B cell (primary cell): ENCODE measurements at regions of chr6 and their contacts with region 1.

Region 1: DNA sequence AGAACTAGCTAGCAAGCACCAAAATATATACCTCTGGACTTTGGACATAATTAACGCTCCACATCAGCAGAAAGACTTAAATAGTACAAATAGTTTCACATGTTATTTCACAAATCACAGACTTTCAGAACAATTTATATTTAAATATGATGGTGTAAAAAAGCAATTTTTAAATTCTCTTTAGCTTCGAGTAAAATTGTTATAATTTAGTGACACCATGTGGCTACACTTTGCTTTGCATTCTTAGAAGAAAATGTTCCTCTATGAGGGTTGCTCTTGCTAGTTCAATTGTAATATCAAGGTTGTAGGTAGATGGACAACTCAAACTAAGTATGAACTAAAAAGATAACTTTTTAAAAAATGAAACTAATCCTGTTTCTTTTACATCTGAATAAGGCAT is 69.0 kb downstream of the BTBD9 start:
- DNase-seq: peak; percentile 50
- ATAC-seq: no peak
- H3K4me3 ChIP-seq: no peak overlapping the region
- H3K4me3 Mint-ChIP-seq: no peak overlapping the region
- H3K27ac ChIP-seq: peak overlapping the region; percentile 91 to 93
- H3K27ac Mint-ChIP-seq: peak overlapping the region; percentile 81
- H3K4me1 ChIP-seq: peaks cover 17 to 21% of the 10 kb centered on the region in 2 donors
- H3K4me1 Mint-ChIP-seq: peaks cover 24% of the 10 kb centered on the region
- H3K27me3 ChIP-seq: no peaks in the 10 kb centered on the region
- H3K27me3 Mint-ChIP-seq: no peaks in the 10 kb centered on the region
- CTCF ChIP-seq: peak; percentile 71

Region 2: DNA sequence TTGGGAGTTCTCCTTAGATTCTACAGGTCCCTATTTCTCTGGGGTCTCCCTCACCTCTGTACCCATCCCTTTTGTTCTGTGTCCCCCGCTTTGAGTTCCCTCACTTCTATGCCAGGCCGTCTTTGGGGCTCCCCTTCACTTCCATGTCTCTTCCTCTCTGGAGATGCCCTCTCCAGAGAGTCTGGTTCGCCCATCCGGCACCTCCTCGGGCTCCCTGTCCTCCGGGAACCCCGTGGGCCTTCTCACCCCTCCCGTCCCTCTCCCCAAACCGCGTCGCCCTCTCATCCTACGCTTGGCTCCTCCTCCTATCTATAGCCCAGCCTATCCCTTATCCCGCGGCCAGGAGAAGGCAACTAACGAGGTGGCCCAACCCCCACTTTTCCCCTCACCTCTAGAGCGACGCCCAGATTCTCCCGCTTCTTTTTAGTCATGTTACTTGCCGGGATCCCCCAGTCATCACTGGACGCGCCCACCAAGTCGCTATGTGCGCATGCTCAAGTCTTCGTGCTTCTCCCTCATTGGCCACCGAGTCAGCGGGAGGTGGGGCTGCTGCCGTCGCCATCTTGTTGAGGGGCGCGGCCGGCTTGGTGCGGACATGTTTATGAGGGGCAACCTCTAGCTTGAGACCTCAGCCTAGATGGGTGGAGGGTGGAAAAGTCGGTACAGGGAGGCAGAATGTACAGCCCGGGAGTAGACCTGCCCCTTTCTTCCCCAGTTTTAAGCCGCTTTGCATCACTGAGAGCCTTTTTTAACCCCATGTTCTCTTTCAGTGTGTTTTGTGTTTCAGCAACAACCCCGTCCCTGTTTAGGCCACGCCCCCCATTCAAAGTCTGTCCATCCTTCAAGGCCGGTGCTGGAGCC is 1071.1 kb before region 1 on chr6 and contains the start of gene CCDC167:
- CTCF ChIA-PET with region 1: no interaction called
- POLR2A ChIA-PET with region 1: no interaction called
- intact Hi-C with region 1: loop called (anchors 5 kb)
- DNase-seq: peak; percentile 96
- ATAC-seq: peak; percentile 91
- H3K4me3 ChIP-seq: peak within 1 kb of the TSS; percentile 70 to 100 (median 93)
- H3K4me3 Mint-ChIP-seq: peak within 1 kb of the TSS; percentile 95
- H3K27ac ChIP-seq: peak within 1 kb of the TSS; percentile 69 to 90
- H3K27ac Mint-ChIP-seq: peak within 1 kb of the TSS; percentile 88
- H3K4me1 ChIP-seq: peaks cover 46 to 67% of the 10 kb centered on the region in 2 donors
- H3K4me1 Mint-ChIP-seq: peaks cover 67% of the 10 kb centered on the region
- H3K27me3 ChIP-seq: no peaks in the 10 kb centered on the region
- H3K27me3 Mint-ChIP-seq: no peaks in the 10 kb centered on the region
- CTCF ChIP-seq: no peak
- total RNA-seq, gene CCDC167: 9.7 and 11.1 TPM in 2 replicates

Region 3: GRCh38 chr6:37698261-37699137 is 872.3 kb before region 1 on chr6:
- CTCF ChIA-PET with region 1: interaction called, 10 read pairs
- POLR2A ChIA-PET with region 1: no interaction called
- intact Hi-C with region 1: loop called (anchors 5 kb)
- DNase-seq: peak; percentile 83
- ATAC-seq: peak; percentile 37
- H3K4me3 ChIP-seq: peak overlapping the region; percentile 40 to 72 (median 60)
- H3K4me3 Mint-ChIP-seq: peak overlapping the region; percentile 88
- H3K27ac ChIP-seq: no peak overlapping the region
- H3K27ac Mint-ChIP-seq: peak overlapping the region; percentile 90
- H3K4me1 ChIP-seq: peaks cover 24 to 25% of the 10 kb centered on the region in 2 donors
- H3K4me1 Mint-ChIP-seq: peaks cover 26% of the 10 kb centered on the region
- H3K27me3 ChIP-seq: peaks cover 0 to 37% (median 18%) of the 10 kb centered on the region in 4 experiments
- H3K27me3 Mint-ChIP-seq: peaks cover 27% of the 10 kb centered on the region
- CTCF ChIP-seq: no peak

Region 4: GRCh38 chr6:38034274-38034914 is 536.4 kb before region 1 on chr6:
- CTCF ChIA-PET with region 1: interaction called, 39 read pairs
- POLR2A ChIA-PET with region 1: interaction called, 3 read pairs
- intact Hi-C with region 1: no loop called
- DNase-seq: peak; percentile 26
- ATAC-seq: no peak
- H3K4me3 ChIP-seq: no peak overlapping the region
- H3K4me3 Mint-ChIP-seq: no peak overlapping the region
- H3K27ac ChIP-seq: no peak overlapping the region
- H3K27ac Mint-ChIP-seq: no peak overlapping the region
- H3K4me1 ChIP-seq: peaks cover 0 to 16% of the 10 kb centered on the region in 2 donors
- H3K4me1 Mint-ChIP-seq: peaks cover 56% of the 10 kb centered on the region
- H3K27me3 ChIP-seq: no peaks in the 10 kb centered on the region
- H3K27me3 Mint-ChIP-seq: no peaks in the 10 kb centered on the region
- CTCF ChIP-seq: peak; percentile 40

Region 5: DNA sequence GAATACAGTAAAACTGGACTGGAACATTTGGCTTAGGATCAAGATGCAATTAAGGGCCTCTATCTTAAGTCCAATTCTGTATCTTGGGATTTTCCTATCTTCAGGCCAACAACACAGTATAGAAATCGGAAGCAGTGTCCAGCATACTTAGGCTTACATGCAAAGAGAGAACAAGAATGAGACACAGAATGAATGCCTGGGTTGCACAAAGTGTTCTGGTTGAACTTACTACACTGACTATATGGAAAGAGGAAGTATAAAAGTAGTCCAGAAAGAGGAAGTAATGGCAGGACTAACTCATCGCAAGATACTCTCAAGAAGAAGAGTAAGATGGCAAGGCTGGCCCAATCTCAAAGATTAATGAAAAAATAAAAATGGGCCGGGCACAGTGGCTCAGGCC is 18.6 kb before region 1 on chr6:
- CTCF ChIA-PET with region 1: interaction called, 16 read pairs
- POLR2A ChIA-PET with region 1: interaction called, 3 read pairs
- intact Hi-C with region 1: loop called (anchors 1 kb)
- DNase-seq: peak; percentile 74
- ATAC-seq: peak; percentile 98
- H3K4me3 ChIP-seq: peak overlapping the region in 1 of 5 experiments; percentile 20
- H3K4me3 Mint-ChIP-seq: no peak overlapping the region
- H3K27ac ChIP-seq: peak overlapping the region; percentile 25 to 37
- H3K27ac Mint-ChIP-seq: no peak overlapping the region
- H3K4me1 ChIP-seq: peaks cover 23% of the 10 kb centered on the region in 2 donors
- H3K4me1 Mint-ChIP-seq: peaks cover 11% of the 10 kb centered on the region
- H3K27me3 ChIP-seq: no peaks in the 10 kb centered on the region
- H3K27me3 Mint-ChIP-seq: no peaks in the 10 kb centered on the region
- CTCF ChIP-seq: no peak

Region 6: DNA sequence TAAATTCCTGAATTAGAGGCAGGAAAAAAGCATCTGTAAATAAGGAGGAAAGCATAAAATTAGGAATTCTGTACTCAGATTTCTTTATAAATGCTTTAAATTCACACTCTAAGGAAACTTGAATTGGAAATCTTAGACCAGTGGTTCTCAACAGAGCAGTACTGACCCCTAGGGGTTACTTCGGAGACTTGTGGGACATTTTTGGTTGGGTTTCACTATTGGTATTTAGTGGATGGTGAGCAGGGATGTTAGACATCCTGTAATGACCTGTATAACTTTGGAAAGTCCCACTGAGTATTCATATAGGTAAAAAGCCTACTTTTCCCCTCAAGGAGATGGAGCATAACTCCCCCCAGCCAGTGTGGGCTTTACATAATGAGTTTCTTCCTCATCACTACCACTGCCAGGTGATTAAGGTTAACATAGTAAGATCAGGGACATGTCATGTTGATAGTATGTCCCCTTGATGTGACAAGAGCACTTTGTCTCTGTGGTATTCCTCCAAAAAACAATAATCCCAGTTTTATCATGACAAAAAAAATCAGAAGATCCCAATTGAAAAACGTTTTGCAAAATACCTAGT is 101.2 kb after region 1 on chr6:
- CTCF ChIA-PET with region 1: interaction called, 3 read pairs
- POLR2A ChIA-PET with region 1: no interaction called
- intact Hi-C with region 1: loop called (anchors 2 kb)
- DNase-seq: peak; percentile 70
- ATAC-seq: peak; percentile 68
- H3K4me3 ChIP-seq: no peak overlapping the region
- H3K4me3 Mint-ChIP-seq: no peak overlapping the region
- H3K27ac ChIP-seq: no peak overlapping the region
- H3K27ac Mint-ChIP-seq: peak overlapping the region; percentile 20
- H3K4me1 ChIP-seq: peaks cover 27 to 33% of the 10 kb centered on the region in 2 donors
- H3K4me1 Mint-ChIP-seq: peaks cover 40% of the 10 kb centered on the region
- H3K27me3 ChIP-seq: no peaks in the 10 kb centered on the region
- H3K27me3 Mint-ChIP-seq: no peaks in the 10 kb centered on the region
- CTCF ChIP-seq: peak; percentile 91

Region 7: GRCh38 chr6:38944655-38945279 is 374.0 kb after region 1 on chr6:
- CTCF ChIA-PET with region 1: no interaction called
- POLR2A ChIA-PET with region 1: no interaction called
- intact Hi-C with region 1: no loop called
- DNase-seq: no peak
- ATAC-seq: no peak
- H3K4me3 ChIP-seq: no peak overlapping the region
- H3K4me3 Mint-ChIP-seq: no peak overlapping the region
- H3K27ac ChIP-seq: no peak overlapping the region
- H3K27ac Mint-ChIP-seq: no peak overlapping the region
- H3K4me1 ChIP-seq: no peaks in the 10 kb centered on the region
- H3K4me1 Mint-ChIP-seq: no peaks in the 10 kb centered on the region
- H3K27me3 ChIP-seq: no peaks in the 10 kb centered on the region
- H3K27me3 Mint-ChIP-seq: no peaks in the 10 kb centered on the region
- CTCF ChIP-seq: no peak

Region 8: GRCh38 chr6:39347906-39348585 is 777.3 kb after region 1 on chr6:
- CTCF ChIA-PET with region 1: no interaction called
- POLR2A ChIA-PET with region 1: no interaction called
- intact Hi-C with region 1: no loop called
- DNase-seq: peak; percentile 67
- ATAC-seq: peak; percentile 60
- H3K4me3 ChIP-seq: no peak overlapping the region
- H3K4me3 Mint-ChIP-seq: no peak overlapping the region
- H3K27ac ChIP-seq: no peak overlapping the region
- H3K27ac Mint-ChIP-seq: no peak overlapping the region
- H3K4me1 ChIP-seq: peaks cover 9 to 11% of the 10 kb centered on the region in 2 donors
- H3K4me1 Mint-ChIP-seq: peaks cover 9% of the 10 kb centered on the region
- H3K27me3 ChIP-seq: no peaks in the 10 kb centered on the region
- H3K27me3 Mint-ChIP-seq: no peaks in the 10 kb centered on the region
- CTCF ChIP-seq: peak; percentile 94